CD14-positive monocyte (primary cell): ENCODE measurements at regions of chr19 and their contacts with region 1.

Region 1: GRCh38 chr19:35462476-35462953 is 14.5 kb downstream of the FFAR2 start:
- DNase-seq: peak; percentile 90 to 99 (median 94)
- H3K4me3 ChIP-seq: peak overlapping the region in 1 of 3 experiments; percentile 11
- H3K4me3 Mint-ChIP-seq: peak overlapping the region; percentile 31 to 75
- H3K27ac ChIP-seq: peak overlapping the region; percentile 0 to 80
- H3K27ac Mint-ChIP-seq: peak overlapping the region; percentile 84 to 96 (median 91)
- H3K4me1 ChIP-seq: peaks cover 53 to 61% of the 10 kb centered on the region in 2 donors
- H3K4me1 Mint-ChIP-seq: peaks cover 62% of the 10 kb centered on the region
- H3K27me3 ChIP-seq: no peaks in the 10 kb centered on the region
- H3K27me3 Mint-ChIP-seq: peaks cover 2 to 4% (median 3%) of the 10 kb centered on the region in 3 donors
- CTCF ChIP-seq: peak; percentile 15

Region 2: DNA sequence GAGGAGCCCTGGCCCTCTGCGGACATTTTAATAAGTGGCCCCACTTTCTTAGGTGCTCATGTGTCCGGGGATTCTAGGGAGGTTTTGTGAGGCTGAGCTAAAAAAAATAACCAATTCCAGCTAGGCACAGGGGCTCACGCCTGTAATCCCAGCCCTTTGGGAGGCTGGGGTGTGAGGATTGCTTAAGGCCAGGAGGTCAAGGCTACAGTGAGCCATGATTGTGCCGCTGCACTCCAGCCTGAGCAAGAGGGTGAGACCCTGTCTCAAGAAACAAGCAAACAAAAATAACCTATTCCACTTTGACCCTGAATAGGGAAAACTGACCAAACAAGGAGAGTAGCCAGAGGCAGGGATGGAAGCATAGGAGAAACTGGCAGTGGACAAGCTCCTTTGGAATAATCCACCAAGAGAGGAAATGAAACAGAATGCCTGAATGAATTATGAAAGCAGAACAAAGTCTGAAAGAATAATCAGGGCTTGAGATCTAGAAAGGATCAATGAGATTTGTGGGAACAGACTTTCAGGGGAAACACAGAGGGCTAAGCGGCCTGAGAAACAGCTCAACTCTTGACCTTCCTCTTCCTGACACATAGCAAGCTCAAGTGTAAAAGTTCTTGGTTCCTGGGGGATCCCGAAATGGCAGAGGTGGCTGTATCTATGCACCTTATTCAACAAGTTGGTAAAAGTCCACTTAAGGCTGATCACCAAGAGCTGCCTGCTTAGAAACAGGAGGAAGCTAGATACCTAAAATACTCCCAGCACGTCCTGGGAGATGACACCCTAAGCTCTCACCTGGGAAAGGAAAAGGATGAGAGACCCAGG is 44.6 kb before region 1 on chr19:
- intact Hi-C with region 1: loop called in 1 of 2 experiments (anchors 5 kb)
- DNase-seq: peak in 2 of 3 donors; percentile 14 to 74
- H3K4me3 ChIP-seq: no peak overlapping the region
- H3K4me3 Mint-ChIP-seq: peak overlapping the region in 1 of 2 donors; percentile 46
- H3K27ac ChIP-seq: no peak overlapping the region
- H3K27ac Mint-ChIP-seq: peak overlapping the region in 3 of 7 donors; percentile 35 to 68 (median 64)
- H3K4me1 ChIP-seq: peaks cover 13 to 21% of the 10 kb centered on the region in 2 donors
- H3K4me1 Mint-ChIP-seq: peaks cover 27% of the 10 kb centered on the region
- H3K27me3 ChIP-seq: peaks cover 0 to 13% of the 10 kb centered on the region in 2 donors
- H3K27me3 Mint-ChIP-seq: peaks cover 22 to 38% (median 28%) of the 10 kb centered on the region in 3 donors
- CTCF ChIP-seq: no peak

Region 3: GRCh38 chr19:35449053-35449687 is 13.3 kb before region 1 on chr19:
- intact Hi-C with region 1: loop called (anchors 2 kb)
- DNase-seq: peak; percentile 77 to 87 (median 80)
- H3K4me3 ChIP-seq: peak overlapping the region; percentile 4 to 73 (median 32)
- H3K4me3 Mint-ChIP-seq: peak overlapping the region; percentile 72 to 79
- H3K27ac ChIP-seq: peak overlapping the region; percentile 95 to 99
- H3K27ac Mint-ChIP-seq: peak overlapping the region; percentile 98 to 100 (median 100)
- H3K4me1 ChIP-seq: peaks cover 74 to 81% of the 10 kb centered on the region in 2 donors
- H3K4me1 Mint-ChIP-seq: peaks cover 77% of the 10 kb centered on the region
- H3K27me3 ChIP-seq: no peaks in the 10 kb centered on the region
- H3K27me3 Mint-ChIP-seq: peaks cover 0 to 16% (median 7%) of the 10 kb centered on the region in 3 donors
- CTCF ChIP-seq: no peak